MCF 10A (cell line): ENCODE measurements at regions of chr9 and their contacts with region 1.

Region 1: DNA sequence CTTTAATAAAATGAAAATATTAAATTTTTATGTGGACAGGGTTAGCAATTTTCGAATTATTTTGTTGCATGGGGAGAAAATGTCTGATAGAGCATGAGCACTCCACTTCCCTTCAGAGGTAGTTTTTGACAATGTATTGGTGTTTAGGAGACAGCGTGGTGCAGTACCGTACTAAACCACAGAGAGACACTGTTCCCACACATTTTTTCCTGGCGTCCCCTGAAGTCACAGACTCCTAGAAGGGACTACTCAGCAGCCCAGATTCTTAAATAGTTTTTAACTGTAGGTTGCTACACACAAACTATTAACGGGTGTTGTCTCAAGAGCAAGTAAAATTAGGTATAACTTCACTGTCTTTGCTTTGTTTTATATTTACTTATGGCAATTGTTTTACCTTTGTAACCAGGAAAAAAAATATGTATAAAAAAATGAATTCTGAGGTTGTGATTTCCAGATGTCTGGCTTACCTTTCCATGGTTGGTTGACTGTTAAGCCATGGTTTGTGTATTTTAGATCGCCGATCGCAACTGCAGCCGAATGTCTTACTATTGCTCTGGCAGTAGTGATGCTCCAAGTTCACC is 171.2 kb downstream of the DOCK8 start:
- DNase-seq: peak; percentile 80
- H3K4me3 Mint-ChIP-seq: no peak overlapping the region
- H3K27ac Mint-ChIP-seq: no peak overlapping the region
- H3K4me1 Mint-ChIP-seq: peaks cover 6% of the 10 kb centered on the region
- H3K27me3 Mint-ChIP-seq: no peaks in the 10 kb centered on the region
- CTCF ChIP-seq: peak; percentile 91

Region 2: DNA sequence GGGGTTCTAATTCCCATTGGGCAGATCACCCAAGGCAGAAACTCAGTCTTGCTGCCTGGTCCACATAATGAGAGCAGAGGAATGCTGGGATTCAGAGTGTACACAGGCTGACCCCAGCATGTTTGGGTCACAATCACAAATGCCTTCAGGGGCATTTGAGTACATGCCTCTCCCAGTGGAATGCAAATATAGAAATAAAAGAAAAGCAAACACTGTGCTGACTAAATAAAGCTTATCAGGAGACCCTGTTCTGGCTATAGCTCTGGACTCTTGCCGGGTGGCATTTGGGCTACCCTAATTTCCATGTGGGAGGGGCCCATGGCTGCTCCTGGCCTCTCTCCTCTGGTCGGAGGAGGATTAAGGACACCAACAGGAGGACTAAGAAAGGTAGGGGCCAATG is 49.9 kb before region 1 on chr9:
- CTCF ChIA-PET with region 1: no interaction called
- POLR2A ChIA-PET with region 1: no interaction called
- intact Hi-C with region 1: no loop called
- DNase-seq: no peak
- H3K4me3 Mint-ChIP-seq: no peak overlapping the region
- H3K27ac Mint-ChIP-seq: no peak overlapping the region
- H3K4me1 Mint-ChIP-seq: no peaks in the 10 kb centered on the region
- H3K27me3 Mint-ChIP-seq: no peaks in the 10 kb centered on the region
- CTCF ChIP-seq: no peak

Region 3: DNA sequence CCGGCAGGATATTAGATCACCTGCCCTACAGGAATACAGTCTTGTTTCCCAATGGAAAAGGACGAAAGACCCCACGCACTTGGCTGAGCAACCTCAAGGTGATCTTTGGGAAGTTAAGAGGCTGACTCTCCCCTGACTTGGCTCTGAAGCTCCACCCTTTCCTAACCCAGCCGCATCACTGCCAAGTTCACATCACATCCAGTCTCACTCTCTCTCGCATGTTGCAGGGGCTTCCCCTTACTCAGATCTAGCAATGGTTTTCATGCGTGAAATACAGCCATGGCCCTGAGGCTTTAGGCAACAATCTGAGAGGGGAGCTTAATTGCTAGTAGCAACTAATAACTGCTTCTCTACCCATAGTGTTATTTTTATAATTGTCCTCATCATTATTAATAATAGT is 40.4 kb after region 1 on chr9:
- CTCF ChIA-PET with region 1: no interaction called
- POLR2A ChIA-PET with region 1: no interaction called
- intact Hi-C with region 1: no loop called
- DNase-seq: no peak
- H3K4me3 Mint-ChIP-seq: no peak overlapping the region
- H3K27ac Mint-ChIP-seq: no peak overlapping the region
- H3K4me1 Mint-ChIP-seq: no peaks in the 10 kb centered on the region
- H3K27me3 Mint-ChIP-seq: no peaks in the 10 kb centered on the region
- CTCF ChIP-seq: no peak

Region 4: GRCh38 chr9:503881-504852 is 118.3 kb after region 1 on chr9:
- CTCF ChIA-PET with region 1: interaction called, 5 read pairs
- POLR2A ChIA-PET with region 1: interaction called, 3 read pairs
- intact Hi-C with region 1: loop called (anchors 1 kb)
- DNase-seq: peak; percentile 82
- H3K4me3 Mint-ChIP-seq: peak within 1 kb of the TSS; percentile 82
- H3K27ac Mint-ChIP-seq: peak within 1 kb of the TSS; percentile 37
- H3K4me1 Mint-ChIP-seq: peaks cover 18% of the 10 kb centered on the region
- H3K27me3 Mint-ChIP-seq: no peaks in the 10 kb centered on the region
- CTCF ChIP-seq: peak; percentile 21

Region 5: GRCh38 chr9:757246-757881 is 371.5 kb after region 1 on chr9:
- CTCF ChIA-PET with region 1: interaction called, 6 read pairs
- POLR2A ChIA-PET with region 1: interaction called, 3 read pairs
- intact Hi-C with region 1: loop called (anchors 2 kb)
- DNase-seq: peak; percentile 74
- H3K4me3 Mint-ChIP-seq: no peak overlapping the region
- H3K27ac Mint-ChIP-seq: no peak overlapping the region
- H3K4me1 Mint-ChIP-seq: peaks cover 7% of the 10 kb centered on the region
- H3K27me3 Mint-ChIP-seq: no peaks in the 10 kb centered on the region
- CTCF ChIP-seq: peak; percentile 50

Region 6: DNA sequence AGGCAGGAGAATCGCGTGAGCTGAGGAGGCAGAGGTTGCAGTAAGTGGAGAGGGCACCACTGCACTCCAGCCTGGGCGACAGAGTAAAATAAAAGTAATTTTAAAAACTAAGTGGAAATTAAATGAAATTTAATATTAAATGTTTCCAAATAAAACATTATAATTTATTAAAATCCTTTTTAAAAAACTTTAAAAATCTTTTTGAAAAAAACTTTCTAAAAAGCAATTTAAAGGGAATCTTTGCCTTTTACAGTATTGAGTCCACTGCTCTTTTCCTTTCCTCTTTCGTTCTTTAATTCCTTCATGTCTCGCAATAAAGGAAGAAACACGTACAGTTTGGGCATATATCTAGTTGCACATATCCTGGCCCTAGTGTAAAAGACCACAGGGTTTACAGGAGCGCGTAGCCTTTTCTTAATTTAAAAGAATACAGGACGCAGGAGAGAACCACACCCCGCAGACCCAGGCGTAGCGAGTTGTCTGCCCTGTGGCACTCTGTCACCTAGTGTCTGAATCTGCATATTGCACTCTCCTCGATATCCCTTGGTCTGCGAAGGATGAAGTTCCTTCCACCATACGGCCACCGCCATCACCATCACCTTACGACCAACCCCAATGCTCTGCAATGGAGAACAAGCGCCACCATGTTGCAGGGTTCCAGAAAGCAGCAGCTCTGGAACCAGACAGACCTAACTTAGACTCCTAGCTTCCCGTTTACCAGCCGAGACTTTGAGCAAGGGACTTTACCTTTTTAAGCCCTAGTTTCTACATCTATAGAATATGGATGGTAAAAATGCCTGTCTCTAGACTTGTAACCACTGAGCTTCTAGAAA is 378.0 kb after region 1 on chr9:
- CTCF ChIA-PET with region 1: no interaction called
- POLR2A ChIA-PET with region 1: no interaction called
- intact Hi-C with region 1: loop called (anchors 1 kb)
- DNase-seq: peak; percentile 71
- H3K4me3 Mint-ChIP-seq: no peak overlapping the region
- H3K27ac Mint-ChIP-seq: no peak overlapping the region
- H3K4me1 Mint-ChIP-seq: peaks cover 5% of the 10 kb centered on the region
- H3K27me3 Mint-ChIP-seq: peaks cover 13% of the 10 kb centered on the region
- CTCF ChIP-seq: peak; percentile 71

Region 7: GRCh38 chr9:806285-807156 is 420.6 kb after region 1 on chr9:
- CTCF ChIA-PET with region 1: interaction called, 4 read pairs
- POLR2A ChIA-PET with region 1: no interaction called
- intact Hi-C with region 1: loop called (anchors 1 kb)
- DNase-seq: peak; percentile 60
- H3K4me3 Mint-ChIP-seq: no peak overlapping the region
- H3K27ac Mint-ChIP-seq: no peak overlapping the region
- H3K4me1 Mint-ChIP-seq: peaks cover 18% of the 10 kb centered on the region
- H3K27me3 Mint-ChIP-seq: no peaks in the 10 kb centered on the region
- CTCF ChIP-seq: peak; percentile 79